ENCODE measurements at regions of chr11 and their contacts with region 1.

Region 1: GRCh38 chr11:114180301-114181055 is 115.7 kb upstream of the NNMT start:
- DNase-seq: peak; percentile 30 to 75
- ATAC-seq: peak; percentile 31 to 66 (median 36)
- H3K4me3 ChIP-seq: peak overlapping the region; percentile 42
- H3K27ac ChIP-seq: peak overlapping the region; percentile 99
- H3K4me1 ChIP-seq: peaks cover 95% of the 10 kb centered on the region
- H3K27me3 ChIP-seq: no peaks in the 10 kb centered on the region
- CTCF ChIP-seq: peak; percentile 72

Region 2: GRCh38 chr11:114036156-114036811 is 144.2 kb before region 1 on chr11:
- intact Hi-C with region 1: loop called in 1 of 2 experiments (anchors 1 kb)
- DNase-seq: peak; percentile 88 to 94
- ATAC-seq: peak; percentile 85 to 93 (median 88)
- H3K4me3 ChIP-seq: peak overlapping the region; percentile 66
- H3K27ac ChIP-seq: peak overlapping the region; percentile 75
- H3K4me1 ChIP-seq: peaks cover 40% of the 10 kb centered on the region
- H3K27me3 ChIP-seq: no peaks in the 10 kb centered on the region
- CTCF ChIP-seq: peak; percentile 87

Region 3: DNA sequence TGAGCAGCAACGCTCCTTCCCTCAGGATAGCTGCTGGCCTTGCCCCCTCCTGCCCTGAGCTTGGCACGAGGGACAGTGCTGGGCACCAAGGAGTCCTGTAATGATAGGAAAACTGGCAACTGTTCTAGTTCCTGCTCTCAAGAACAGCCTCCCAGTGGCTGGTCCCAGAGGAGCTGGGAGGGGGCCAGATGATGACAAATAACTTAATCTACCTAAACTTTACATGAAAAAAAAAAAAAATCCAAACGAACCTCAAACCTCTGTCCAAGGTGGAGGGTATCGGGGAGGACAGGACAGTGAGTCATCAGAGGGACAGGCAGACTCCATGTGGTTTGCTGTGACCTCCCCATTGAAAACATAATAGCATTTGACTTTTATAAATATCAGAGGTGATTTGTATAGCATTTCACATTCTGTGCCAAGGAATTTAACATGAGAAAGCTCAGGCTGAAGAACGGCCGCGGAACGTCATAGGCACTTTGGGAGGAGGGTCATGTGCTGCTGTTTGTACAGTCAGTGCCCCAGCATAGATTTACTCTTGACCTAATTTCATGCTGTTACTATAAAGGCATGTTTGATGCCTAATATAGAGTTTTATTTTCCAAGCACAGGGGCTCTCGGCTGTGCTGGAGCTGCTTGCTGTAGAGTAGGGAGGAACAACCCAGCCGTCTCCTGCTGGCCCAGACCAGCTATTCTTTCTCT is 17.5 kb after region 1 on chr11:
- intact Hi-C with region 1: loop called in 1 of 2 experiments (anchors 2 kb)
- DNase-seq: peak; percentile 80 to 92
- ATAC-seq: peak; percentile 68 to 85 (median 80)
- H3K4me3 ChIP-seq: peak overlapping the region; percentile 23
- H3K27ac ChIP-seq: peak overlapping the region; percentile 91
- H3K4me1 ChIP-seq: peaks cover 96% of the 10 kb centered on the region
- H3K27me3 ChIP-seq: no peaks in the 10 kb centered on the region
- CTCF ChIP-seq: no peak

Measured in psoas muscle (tissue), 8 donors.